ENCODE measurements at regions of chr10 and their contacts with region 1.

Region 1: GRCh38 chr10:60434418-60435046 is 44.9 kb upstream of the ANK3 start:
- DNase-seq: no peak
- H3K4me3 ChIP-seq: no peak overlapping the region
- H3K27ac ChIP-seq: no peak overlapping the region
- H3K4me1 ChIP-seq: peaks cover 18% of the 10 kb centered on the region
- H3K27me3 ChIP-seq: no peaks in the 10 kb centered on the region
- CTCF ChIP-seq: peak; percentile 74

Region 2: GRCh38 chr10:60237977-60238758 is 196.4 kb before region 1 on chr10:
- intact Hi-C with region 1: loop called (anchors 10 kb)
- DNase-seq: no peak
- H3K4me3 ChIP-seq: peak overlapping the region; percentile 16
- H3K27ac ChIP-seq: peak overlapping the region; percentile 74
- H3K4me1 ChIP-seq: peaks cover 48% of the 10 kb centered on the region
- H3K27me3 ChIP-seq: no peaks in the 10 kb centered on the region
- CTCF ChIP-seq: peak; percentile 46

Measured in left ventricle myocardium inferior (tissue), 1 donor.